ENCODE measurements at regions of chr10 and their contacts with region 1.

Region 1: GRCh38 chr10:110746254-110746826 is 102.2 kb downstream of the RBM20 start:
- DNase-seq: peak in 1 of 2 donors; percentile 81
- H3K4me3 ChIP-seq: no peak overlapping the region
- H3K27ac ChIP-seq: no peak overlapping the region
- H3K4me1 ChIP-seq: peaks cover 0 to 3% of the 10 kb centered on the region in 2 donors
- H3K27me3 ChIP-seq: no peaks in the 10 kb centered on the region
- CTCF ChIP-seq: peak; percentile 78 to 85 (median 79)

Region 2: DNA sequence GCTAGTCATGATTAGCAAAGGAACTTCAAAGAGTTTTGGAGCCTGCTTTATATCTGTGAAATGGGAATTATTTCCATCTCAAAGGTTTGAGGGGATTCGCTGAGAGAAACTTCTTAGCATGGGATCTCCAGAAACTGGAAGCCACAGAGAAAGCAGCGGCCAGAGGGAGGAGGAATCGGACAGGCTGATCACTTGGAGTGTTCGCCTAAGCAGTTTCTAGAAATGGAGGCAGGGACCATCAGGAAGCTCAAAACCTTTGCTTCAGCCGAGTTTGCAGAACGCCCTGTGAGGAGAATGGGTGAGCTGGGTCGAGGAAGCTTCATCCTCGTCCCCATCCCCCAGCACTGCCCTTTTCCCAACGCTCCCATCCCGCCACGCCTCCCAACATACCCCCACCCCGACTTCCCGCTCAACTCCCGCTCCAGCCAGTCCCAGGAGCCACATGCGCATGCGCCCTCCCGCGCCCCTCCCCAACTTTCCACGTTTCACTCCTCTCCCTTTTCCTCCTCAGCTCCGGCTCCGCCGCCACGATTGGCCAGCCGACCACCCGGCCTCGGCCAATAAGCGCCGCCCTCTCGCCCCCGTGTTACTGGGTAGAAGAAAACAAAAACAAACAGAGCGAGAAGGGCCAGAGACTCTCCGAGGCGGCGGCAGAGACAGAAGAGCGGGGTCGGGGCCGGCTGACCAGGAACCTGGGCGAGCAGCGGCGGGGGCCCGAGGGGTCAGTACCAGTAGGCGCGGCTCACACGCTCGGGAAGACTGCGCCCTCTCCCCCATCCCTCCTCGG is 125.2 kb after region 1 on chr10 and contains the start of gene PDCD4:
- intact Hi-C with region 1: loop called (anchors 5 kb)
- DNase-seq: peak; percentile 99 to 100
- H3K4me3 ChIP-seq: peak within 1 kb of the TSS; percentile 87 to 88
- H3K27ac ChIP-seq: peak within 1 kb of the TSS; percentile 97 to 99
- H3K4me1 ChIP-seq: peaks cover 16 to 35% of the 10 kb centered on the region in 2 donors
- H3K27me3 ChIP-seq: no peaks in the 10 kb centered on the region
- CTCF ChIP-seq: no peak
- total RNA-seq, gene PDCD4: 10.3 TPM

Region 3: DNA sequence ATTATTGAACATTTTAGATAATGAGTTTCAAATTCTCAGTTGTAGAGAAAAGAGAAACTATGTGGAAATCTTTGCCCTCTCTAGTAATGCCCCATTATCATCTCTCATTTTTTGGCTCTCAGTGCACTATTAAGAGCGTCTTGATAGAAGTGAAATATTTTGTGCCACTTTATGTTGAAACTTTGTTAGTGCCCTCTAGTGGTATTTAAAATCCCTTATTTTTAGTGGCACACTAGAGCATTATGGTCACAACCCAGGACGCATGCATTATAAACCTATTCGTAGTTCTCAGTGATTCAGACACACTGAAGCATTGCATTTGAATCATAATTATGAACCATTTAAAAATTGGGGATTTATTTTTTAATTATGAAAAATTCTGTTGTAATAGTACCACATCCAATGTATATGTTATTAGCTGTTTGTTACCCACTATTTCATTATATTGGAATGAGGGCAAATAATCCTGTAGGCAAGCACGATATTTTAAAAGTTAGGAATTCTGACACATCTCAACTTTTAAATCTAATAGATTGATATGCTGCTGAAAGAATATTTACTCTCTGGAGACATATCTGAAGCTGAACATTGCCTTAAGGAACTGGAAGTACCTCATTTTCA is 147.3 kb after region 1 on chr10:
- intact Hi-C with region 1: loop called (anchors 1 kb)
- DNase-seq: no peak
- H3K4me3 ChIP-seq: no peak overlapping the region
- H3K27ac ChIP-seq: no peak overlapping the region
- H3K4me1 ChIP-seq: no peaks in the 10 kb centered on the region
- H3K27me3 ChIP-seq: no peaks in the 10 kb centered on the region
- CTCF ChIP-seq: peak; percentile 43 to 67 (median 47)

Region 4: DNA sequence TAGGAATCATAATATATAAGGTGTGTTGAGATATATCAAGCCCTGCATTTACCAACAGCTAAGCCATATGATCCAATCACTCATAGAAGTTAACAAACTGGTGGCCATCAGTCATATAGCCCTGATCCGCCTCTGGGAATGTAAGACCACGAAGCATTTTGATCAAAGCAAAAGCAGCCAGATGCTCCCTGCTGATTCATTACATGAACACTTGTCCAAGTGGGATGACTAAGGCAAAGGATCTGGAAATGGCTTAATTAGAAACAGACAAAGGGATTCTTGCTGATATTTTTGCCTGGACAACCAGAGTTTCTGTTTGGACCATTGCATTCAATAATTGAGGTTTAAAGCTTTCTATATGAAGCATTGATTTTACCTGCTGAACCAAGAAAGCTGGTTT is 901.7 kb after region 1 on chr10:
- intact Hi-C with region 1: no loop called
- DNase-seq: no peak
- H3K4me3 ChIP-seq: no peak overlapping the region
- H3K27ac ChIP-seq: no peak overlapping the region
- H3K4me1 ChIP-seq: no peaks in the 10 kb centered on the region
- H3K27me3 ChIP-seq: no peaks in the 10 kb centered on the region
- CTCF ChIP-seq: no peak

Measured in ascending aorta (tissue), 2 donors.